ENCODE measurements at regions of chr17 and their contacts with region 1.

Region 1: GRCh38 chr17:2688351-2689342 is 22.9 kb downstream of the CLUH start:
- DNase-seq: no peak
- H3K4me3 ChIP-seq: no peak overlapping the region
- H3K27ac ChIP-seq: no peak overlapping the region
- H3K4me1 ChIP-seq: peaks cover 5% of the 10 kb centered on the region
- H3K27me3 ChIP-seq: no peaks in the 10 kb centered on the region
- CTCF ChIP-seq: no peak
- POLR2A ChIP-seq: no peak

Region 2: GRCh38 chr17:2511462-2512369 is 176.9 kb before region 1 on chr17 and contains the start of gene METTL16:
- intact Hi-C with region 1: loop called (anchors 10 kb)
- DNase-seq: peak; percentile 98
- H3K4me3 ChIP-seq: peak within 1 kb of the TSS; percentile 46 to 72
- H3K27ac ChIP-seq: peak within 1 kb of the TSS; percentile 85 to 88
- H3K4me1 ChIP-seq: peaks cover 3% of the 10 kb centered on the region
- H3K27me3 ChIP-seq: no peaks in the 10 kb centered on the region
- CTCF ChIP-seq: no peak
- POLR2A ChIP-seq: peak; percentile 66
- total RNA-seq, gene METTL16: 46.6 to 47.9 TPM

Region 3: DNA sequence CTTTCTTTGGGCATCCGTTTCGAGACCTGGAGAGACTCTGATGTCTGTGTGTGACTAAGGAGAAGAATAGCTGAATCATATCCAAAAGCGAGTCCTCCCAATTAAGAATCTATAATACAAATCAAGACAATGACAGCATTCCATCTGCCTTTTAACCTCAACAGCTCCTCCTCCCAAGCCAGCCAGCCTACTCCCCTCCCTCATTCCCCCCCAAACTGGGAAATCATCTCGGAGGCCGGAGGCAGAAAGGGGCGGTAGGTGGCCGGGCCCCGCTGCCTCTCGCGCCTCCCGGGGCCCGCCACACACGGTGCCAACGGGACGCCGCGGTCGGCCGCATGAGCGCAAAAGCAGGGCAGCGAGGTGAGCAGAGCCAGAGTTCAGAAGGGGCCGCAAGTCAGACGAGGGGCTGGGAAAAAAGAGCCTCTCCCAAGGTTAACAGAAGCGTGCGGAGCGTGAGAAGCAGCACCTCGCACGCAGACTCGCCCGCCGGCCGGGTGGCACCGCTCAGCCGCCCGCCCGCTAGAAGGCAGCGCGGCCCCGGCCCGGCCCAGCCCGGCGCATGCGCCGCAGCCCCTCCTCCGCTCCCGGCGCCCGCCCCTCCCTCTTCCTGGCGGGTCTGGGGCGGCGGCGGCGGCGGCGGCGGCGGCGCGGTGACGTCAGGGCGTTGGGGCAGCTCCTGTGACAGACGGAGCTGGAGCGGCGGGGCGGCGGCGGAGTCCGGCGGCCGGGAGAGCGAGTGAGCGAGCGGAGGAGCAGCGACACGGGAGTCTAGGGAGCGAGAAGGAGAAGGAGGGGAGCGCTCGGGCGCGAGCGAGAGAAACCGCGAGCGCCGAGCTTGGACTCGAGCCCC is 95.5 kb before region 1 on chr17 and contains the start of gene PAFAH1B1:
- intact Hi-C with region 1: loop called (anchors 5 kb)
- DNase-seq: peak; percentile 88
- H3K4me3 ChIP-seq: peak within 1 kb of the TSS; percentile 90 to 91
- H3K27ac ChIP-seq: peak within 1 kb of the TSS; percentile 98 to 99
- H3K4me1 ChIP-seq: peaks cover 4% of the 10 kb centered on the region
- H3K27me3 ChIP-seq: no peaks in the 10 kb centered on the region
- CTCF ChIP-seq: peak in 3 of 4 experiments; percentile 25 to 54 (median 30)
- POLR2A ChIP-seq: peak; percentile 76
- total RNA-seq, gene PAFAH1B1: 47.9 to 92.9 TPM

Measured in prostate gland (tissue), 2 donors.